Activated CD4-positive, alpha-beta memory T cell treated with anti-CD3 and anti-CD28 coated beads for 36 hours (primary cell): ENCODE measurements at regions of chr2 and their contacts with region 1.

Region 1: DNA sequence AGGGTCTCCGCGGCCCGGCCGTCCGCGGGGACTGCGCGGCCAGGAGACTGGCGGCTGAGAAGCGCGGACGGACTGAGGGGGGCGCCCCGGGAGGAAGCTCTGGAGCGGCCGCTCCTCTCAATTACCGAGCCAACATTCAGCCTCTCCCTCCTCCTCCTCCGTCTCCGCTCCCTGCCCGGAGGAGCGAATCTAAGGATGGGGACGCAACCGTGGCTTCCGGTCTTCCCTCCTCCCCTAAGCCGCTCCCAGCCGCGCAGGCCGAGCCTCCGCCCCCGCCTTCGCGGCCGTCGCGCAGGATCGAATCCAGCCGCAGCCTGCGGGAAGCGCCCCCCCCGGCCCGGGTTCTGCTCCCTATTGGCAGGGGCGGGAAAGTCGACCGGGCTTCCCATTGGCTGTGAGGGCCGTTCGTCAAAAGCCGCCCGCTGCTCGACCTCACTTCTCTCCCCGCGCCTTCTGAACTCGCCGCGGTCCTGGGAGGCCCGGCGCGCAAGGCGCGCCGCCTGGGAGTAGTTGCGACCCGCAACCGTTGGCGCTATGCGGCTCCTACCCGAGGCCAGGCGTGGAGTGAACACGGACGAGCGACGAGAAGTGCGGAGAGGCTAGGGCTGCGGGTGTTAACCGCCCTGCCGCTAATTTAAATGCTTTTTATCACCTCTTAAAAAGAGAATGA is at the start of gene HNRNPLL:
- DNase-seq: peak; percentile 98
- H3K4me3 Mint-ChIP-seq: peak within 1 kb of the TSS; percentile 92
- H3K27ac Mint-ChIP-seq: peak within 1 kb of the TSS; percentile 93
- H3K4me1 Mint-ChIP-seq: peaks cover 39% of the 10 kb centered on the region
- H3K27me3 Mint-ChIP-seq: no peaks in the 10 kb centered on the region
- total RNA-seq, gene HNRNPLL: 106 to 108 TPM

Region 2: DNA sequence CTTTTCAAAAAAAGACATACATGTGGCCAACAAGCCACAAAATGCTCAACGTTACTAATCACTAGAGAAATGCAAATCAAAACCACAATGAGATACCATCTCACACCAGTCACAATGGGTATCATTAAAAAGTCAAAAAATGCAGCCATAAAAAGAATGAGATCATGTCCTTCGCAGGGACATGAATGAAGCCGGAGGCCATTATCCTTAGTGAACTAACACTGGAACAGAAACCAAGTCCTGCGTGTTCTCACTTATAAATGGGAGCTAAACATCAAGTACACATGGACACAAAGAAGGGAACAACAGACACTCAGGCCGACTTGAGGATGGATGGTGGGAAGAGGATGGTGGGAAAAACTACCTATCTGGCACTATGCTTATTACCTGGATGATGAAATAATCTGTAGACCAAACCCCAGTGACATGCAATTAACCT is 207.9 kb before region 1 on chr2:
- CTCF ChIA-PET with region 1: no interaction called
- POLR2A ChIA-PET with region 1: no interaction called
- intact Hi-C with region 1: no loop called
- DNase-seq: no peak
- H3K4me3 Mint-ChIP-seq: no peak overlapping the region
- H3K27ac Mint-ChIP-seq: no peak overlapping the region
- H3K4me1 Mint-ChIP-seq: peaks cover 9% of the 10 kb centered on the region
- H3K27me3 Mint-ChIP-seq: peaks cover 15% of the 10 kb centered on the region

Region 3: GRCh38 chr2:38535744-38536506 is 66.9 kb before region 1 on chr2:
- CTCF ChIA-PET with region 1: interaction called, 3 read pairs
- POLR2A ChIA-PET with region 1: no interaction called
- intact Hi-C with region 1: loop called (anchors 2 kb)
- DNase-seq: peak; percentile 85
- H3K4me3 Mint-ChIP-seq: peak overlapping the region; percentile 59
- H3K27ac Mint-ChIP-seq: no peak overlapping the region
- H3K4me1 Mint-ChIP-seq: peaks cover 6% of the 10 kb centered on the region
- H3K27me3 Mint-ChIP-seq: no peaks in the 10 kb centered on the region

Region 4: GRCh38 chr2:38634684-38635083 is 31.8 kb after region 1 on chr2:
- CTCF ChIA-PET with region 1: interaction called, 16 read pairs
- POLR2A ChIA-PET with region 1: no interaction called
- intact Hi-C with region 1: no loop called
- DNase-seq: no peak
- H3K4me3 Mint-ChIP-seq: no peak overlapping the region
- H3K27ac Mint-ChIP-seq: no peak overlapping the region
- H3K4me1 Mint-ChIP-seq: peaks cover 29% of the 10 kb centered on the region
- H3K27me3 Mint-ChIP-seq: no peaks in the 10 kb centered on the region

Region 5: DNA sequence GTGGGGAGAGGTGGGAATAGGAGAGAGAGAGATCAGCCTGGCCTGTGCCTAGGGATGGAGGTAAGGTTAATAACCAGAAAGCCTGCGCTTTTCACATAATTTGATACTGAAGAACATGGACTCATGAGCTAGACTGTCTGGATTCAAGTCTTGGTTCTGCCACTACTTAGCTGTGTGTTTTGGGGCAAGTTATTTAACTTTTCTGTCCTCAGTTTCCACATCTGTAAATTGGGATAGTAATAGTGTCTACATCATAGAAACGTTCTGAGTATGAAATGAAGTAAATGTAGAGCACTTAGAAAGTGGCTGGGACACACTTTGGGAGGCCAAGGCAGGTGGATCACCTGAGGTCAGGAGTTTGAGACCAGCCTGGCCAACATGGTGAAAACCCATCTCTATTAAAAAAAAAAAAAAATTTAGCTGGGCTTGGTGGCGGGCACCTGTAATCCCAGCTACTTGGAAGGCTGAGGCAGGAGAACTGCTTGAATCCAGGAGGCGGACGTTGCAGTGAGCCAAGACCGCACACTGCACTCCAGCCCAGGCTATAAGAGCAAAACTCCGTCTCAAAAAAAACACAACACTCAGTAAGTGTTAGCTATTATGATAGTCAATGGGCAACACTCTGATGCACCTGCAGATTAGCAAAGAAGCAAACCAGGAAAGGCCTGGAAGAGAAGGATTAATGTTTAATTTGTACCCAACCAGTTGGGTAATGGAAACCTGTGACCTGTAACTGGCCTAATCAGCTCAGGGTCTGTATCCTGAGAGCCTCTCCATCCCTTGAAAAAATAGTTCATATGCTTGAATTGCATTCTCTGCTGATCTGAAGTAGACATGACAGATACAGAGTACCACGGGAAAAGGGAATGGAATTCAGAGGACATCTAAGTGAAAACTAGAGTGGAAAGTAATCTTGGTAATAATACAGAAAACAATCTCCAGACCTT is 69.9 kb after region 1 on chr2:
- CTCF ChIA-PET with region 1: interaction called, 85 read pairs
- POLR2A ChIA-PET with region 1: interaction called, 235 read pairs
- intact Hi-C with region 1: loop called (anchors 1 kb)
- DNase-seq: no peak
- H3K4me3 Mint-ChIP-seq: no peak overlapping the region
- H3K27ac Mint-ChIP-seq: peak overlapping the region; percentile 67
- H3K4me1 Mint-ChIP-seq: peaks cover 75% of the 10 kb centered on the region
- H3K27me3 Mint-ChIP-seq: no peaks in the 10 kb centered on the region

Region 6: GRCh38 chr2:38690499-38691294 is 87.8 kb after region 1 on chr2:
- CTCF ChIA-PET with region 1: interaction called, 10 read pairs
- POLR2A ChIA-PET with region 1: interaction called, 16 read pairs
- intact Hi-C with region 1: no loop called
- DNase-seq: peak; percentile 50
- H3K4me3 Mint-ChIP-seq: no peak overlapping the region
- H3K27ac Mint-ChIP-seq: peak overlapping the region; percentile 88
- H3K4me1 Mint-ChIP-seq: peaks cover 78% of the 10 kb centered on the region
- H3K27me3 Mint-ChIP-seq: no peaks in the 10 kb centered on the region

Region 7: DNA sequence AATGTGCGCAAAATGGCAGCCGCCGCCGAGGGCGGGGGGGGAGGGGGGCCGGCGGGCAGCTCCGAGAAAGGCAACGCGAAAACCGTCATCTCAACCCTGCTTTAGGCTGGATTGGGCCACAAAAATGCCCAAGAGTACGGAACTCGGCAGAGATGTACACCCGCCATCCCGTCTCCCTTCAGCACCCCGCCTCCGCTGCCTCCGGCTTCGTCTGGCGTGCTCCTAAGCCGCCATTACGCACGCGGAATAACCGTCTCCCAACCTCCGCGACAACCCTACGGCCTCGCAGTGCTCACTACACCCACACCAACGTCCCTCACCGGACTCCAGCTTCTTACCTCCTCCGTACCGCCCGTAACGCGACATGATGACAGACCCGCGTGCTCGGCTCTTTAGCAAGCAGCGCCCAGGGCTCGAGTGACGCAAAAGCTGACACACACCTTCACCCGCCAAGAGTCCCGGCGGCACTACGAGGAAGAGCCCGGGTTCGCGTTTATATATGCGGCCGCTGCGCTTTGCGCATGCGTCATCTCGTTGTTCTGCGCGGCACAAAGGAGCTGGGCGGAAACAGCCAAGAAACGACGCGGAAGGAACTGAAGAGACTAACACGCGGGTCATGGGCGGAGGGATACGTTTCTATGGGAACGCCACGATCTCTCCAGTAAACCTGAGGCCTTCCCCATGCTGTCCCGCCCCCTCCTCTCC is 148.2 kb after region 1 on chr2 and contains the start of gene SRSF7:
- CTCF ChIA-PET with region 1: interaction called, 5 read pairs
- POLR2A ChIA-PET with region 1: interaction called, 483 read pairs
- intact Hi-C with region 1: loop called (anchors 1 kb)
- DNase-seq: peak; percentile 98
- H3K4me3 Mint-ChIP-seq: peak within 1 kb of the TSS; percentile 95
- H3K27ac Mint-ChIP-seq: peak within 1 kb of the TSS; percentile 100
- H3K4me1 Mint-ChIP-seq: peaks cover 53% of the 10 kb centered on the region
- H3K27me3 Mint-ChIP-seq: peaks cover 6% of the 10 kb centered on the region
- total RNA-seq, gene SRSF7: 276 to 279 TPM